Adrenal gland (tissue), 19 donors: ENCODE measurements at regions of chr7 and their contacts with region 1.

Region 1: GRCh38 chr7:31027161-31027965 is 24.7 kb upstream of the ADCYAP1R1 start:
- DNase-seq: peak in 3 of 7 donors; percentile 14 to 71 (median 34)
- H3K4me3 ChIP-seq: no peak overlapping the region
- H3K27ac ChIP-seq: peak overlapping the region in 2 of 5 donors; percentile 22 to 54
- H3K4me1 ChIP-seq: no peaks in the 10 kb centered on the region
- H3K27me3 ChIP-seq: no peaks in the 10 kb centered on the region
- CTCF ChIP-seq: no peak
- POLR2A ChIP-seq: no peak

Region 2: DNA sequence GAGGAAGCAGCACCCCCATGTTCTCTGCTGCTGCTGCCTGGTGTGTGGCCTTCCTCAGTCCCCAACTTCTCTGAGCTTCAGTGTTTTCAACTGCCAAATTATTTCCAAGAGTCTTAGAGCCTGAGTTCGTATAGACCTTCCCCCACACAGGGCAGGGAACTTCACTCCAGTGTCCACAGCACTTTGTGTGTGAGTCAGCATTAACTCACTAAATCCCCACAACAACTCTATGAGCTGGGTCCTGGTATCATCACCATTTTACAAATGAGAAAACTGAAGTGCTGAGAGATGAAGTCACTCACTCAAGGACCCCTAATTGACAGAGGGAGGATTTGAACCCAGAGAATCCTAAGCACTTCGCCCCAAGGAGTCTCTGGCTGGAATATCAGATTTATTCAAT is 73.1 kb after region 1 on chr7:
- intact Hi-C with region 1: loop called in 1 of 2 experiments (anchors 10 kb)
- DNase-seq: peak in 1 of 7 donors; percentile 10
- H3K4me3 ChIP-seq: no peak overlapping the region
- H3K27ac ChIP-seq: no peak overlapping the region
- H3K4me1 ChIP-seq: no peaks in the 10 kb centered on the region
- H3K27me3 ChIP-seq: no peaks in the 10 kb centered on the region
- CTCF ChIP-seq: no peak
- POLR2A ChIP-seq: no peak